Caki2 (cell line): ENCODE measurements at regions of chr6 and their contacts with region 1.

Region 1: GRCh38 chr6:2931970-2932748 is 29.1 kb upstream of the SERPINB9 start:
- DNase-seq: peak; percentile 83

Region 2: DNA sequence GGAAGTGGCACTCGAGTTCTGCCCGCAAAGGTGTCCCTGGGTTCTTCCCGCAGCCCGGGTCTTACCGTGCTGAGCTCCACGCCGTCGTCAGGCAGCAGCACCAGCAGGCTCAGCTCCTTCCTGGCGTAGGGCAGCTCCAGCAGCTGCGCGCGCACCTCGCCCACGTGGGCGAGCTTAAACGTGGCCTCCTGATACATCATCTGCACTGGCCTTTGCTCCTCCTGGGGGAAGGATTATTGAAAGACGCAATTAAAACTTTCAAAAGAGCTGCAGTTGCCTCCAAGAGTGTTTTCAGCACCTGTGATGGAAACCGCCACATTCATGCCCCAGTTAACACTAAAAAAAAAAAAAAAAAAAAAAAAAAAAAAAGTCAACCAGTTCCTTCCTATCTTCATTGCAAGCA is 40.4 kb before region 1 on chr6:
- in situ Hi-C with region 1: loop called (anchors 5 kb)
- DNase-seq: no peak